Left colon (tissue), 2 donors: ENCODE measurements at regions of chr3 and their contacts with region 1.

Region 1: DNA sequence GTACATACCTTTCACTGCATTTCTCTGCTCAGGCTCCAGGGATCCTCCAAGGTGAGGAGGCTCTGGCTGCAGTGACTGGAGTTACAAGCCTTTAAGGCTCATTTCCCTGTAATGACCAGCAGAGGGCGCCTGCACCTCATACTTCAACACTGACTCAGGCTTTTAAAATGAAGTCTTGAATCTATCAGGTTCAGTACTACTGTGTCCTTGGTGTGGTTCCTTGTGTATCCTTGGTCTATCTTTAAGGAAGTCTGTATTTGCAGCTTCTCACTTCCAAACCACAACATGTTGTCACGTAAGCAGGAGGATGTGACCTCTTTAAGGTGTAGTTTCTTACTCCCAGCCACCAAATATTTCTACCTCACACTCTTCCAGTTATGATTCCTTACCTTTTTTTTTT is 122.5 kb upstream of the ZBED2 start:
- DNase-seq: peak; percentile 61 to 71
- ATAC-seq: peak; percentile 98

Region 2: DNA sequence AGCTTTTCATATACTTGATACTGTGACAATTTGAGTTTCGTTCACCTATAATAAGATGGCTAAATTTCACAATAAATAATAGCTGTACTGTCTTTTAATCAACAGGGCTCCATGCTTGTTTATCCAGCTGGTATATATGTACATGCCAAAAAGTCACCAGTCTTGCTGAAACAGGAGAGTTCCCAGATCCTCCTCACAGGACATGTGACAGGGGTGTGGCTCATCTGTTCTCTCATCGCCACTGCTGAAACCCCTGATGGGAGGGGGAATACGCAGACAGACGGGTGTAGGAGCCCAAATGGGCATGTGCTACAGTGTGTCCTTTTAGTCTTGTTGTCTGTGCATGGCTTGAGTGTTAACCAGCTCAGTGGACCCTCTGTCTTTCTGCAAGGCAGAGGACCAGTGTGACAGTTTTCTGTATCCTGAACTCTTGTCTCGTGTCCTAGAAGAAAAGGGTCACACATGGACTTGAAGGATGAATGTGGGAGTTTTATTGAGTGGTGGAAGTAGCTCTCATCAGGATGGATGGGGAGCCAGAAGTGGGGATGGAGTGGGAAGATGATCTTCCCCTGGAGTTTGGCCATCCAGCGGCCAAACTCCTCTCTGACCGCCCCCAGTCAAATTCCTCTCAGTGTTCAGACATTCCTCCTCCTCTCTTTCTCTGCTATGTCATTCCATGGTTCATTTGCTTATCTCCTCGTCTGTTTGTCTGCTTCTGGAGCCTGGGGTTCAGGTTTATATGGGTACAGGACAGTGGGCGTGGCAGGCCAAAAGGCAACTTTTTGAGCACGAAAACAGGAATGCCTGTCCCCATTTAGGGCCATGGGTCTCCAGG is 759.1 kb before region 1 on chr3:
- intact Hi-C with region 1: no loop called
- DNase-seq: no peak
- ATAC-seq: no peak

Region 3: DNA sequence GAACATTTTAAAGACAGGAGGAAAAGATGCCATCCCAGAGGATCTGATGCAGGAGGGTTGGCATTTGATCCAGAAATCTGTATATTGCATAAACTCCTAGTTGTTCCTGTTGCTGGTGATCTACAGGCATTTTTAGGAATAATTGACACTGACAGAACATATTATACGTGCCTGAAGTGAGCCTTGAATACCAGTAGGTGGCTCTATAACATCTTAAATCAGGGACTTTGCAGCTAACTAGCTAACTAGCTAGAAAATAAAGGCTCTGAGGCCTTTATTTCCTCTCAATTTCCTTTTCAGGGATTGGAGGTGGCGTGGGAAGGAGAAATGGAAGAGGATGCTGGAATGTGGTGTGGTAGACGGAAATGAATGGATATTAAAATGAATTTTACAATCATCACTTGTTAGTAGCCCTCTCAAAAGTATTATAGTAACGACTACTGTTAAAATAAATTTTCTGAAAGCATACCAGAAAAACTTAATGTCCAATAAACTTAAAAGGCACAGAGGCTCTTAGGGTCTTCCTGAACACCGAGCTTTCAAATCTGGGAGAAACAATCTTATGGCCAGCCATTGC is 48.6 kb before region 1 on chr3:
- intact Hi-C with region 1: no loop called
- DNase-seq: no peak
- ATAC-seq: peak; percentile 89

Region 4: DNA sequence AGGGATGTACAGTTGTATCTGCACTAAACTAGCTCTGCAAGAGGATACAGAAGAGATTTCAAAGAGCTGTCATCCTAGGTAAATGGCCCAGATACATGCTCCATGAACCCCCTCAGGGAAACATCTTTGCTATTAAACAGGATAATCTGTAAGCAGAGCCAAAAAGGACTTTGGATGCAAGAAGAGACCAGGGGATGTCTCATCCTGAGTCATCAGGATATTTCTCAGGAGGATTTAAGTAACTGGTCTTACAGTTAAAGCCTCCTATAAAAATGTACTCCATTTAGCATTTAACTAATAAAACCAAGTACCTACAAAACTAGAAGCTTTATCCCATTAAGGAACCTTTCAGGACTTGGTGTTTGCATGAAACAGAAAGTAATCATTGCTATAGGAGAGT is 93.3 kb after region 1 on chr3:
- intact Hi-C with region 1: no loop called
- DNase-seq: no peak
- ATAC-seq: no peak

Region 5: GRCh38 chr3:111859974-111860859 is 142.6 kb after region 1 on chr3:
- intact Hi-C with region 1: loop called in 1 of 2 experiments (anchors 5 kb)
- DNase-seq: peak; percentile 56 to 65
- ATAC-seq: peak; percentile 78